Endothelial cell of umbilical vein (primary cell): ENCODE measurements at regions of chr20 and their contacts with region 1.

Region 1: GRCh38 chr20:47620808-47621805 is 119.4 kb downstream of the NCOA3 start:
- DNase-seq: peak; percentile 83
- H3K4me3 ChIP-seq: no peak overlapping the region
- H3K27ac ChIP-seq: no peak overlapping the region
- H3K4me1 ChIP-seq: peaks cover 3% of the 10 kb centered on the region
- H3K27me3 ChIP-seq: no peaks in the 10 kb centered on the region
- CTCF ChIP-seq: peak; percentile 49 to 55
- POLR2A ChIP-seq: no peak

Region 2: GRCh38 chr20:47205577-47206498 is 415.3 kb before region 1 on chr20:
- CTCF ChIA-PET with region 1: interaction called, 41 read pairs
- POLR2A ChIA-PET with region 1: no interaction called
- dilution Hi-C with region 1: no loop called
- intact Hi-C with region 1: no loop called
- DNase-seq: peak; percentile 64
- H3K4me3 ChIP-seq: no peak overlapping the region
- H3K27ac ChIP-seq: no peak overlapping the region
- H3K4me1 ChIP-seq: peaks cover 7% of the 10 kb centered on the region
- H3K27me3 ChIP-seq: no peaks in the 10 kb centered on the region
- CTCF ChIP-seq: peak; percentile 73 to 81
- POLR2A ChIP-seq: no peak

Region 3: GRCh38 chr20:47356526-47357295 is 264.4 kb before region 1 on chr20 and contains the start of gene ZMYND8:
- CTCF ChIA-PET with region 1: interaction called, 10 read pairs
- POLR2A ChIA-PET with region 1: no interaction called
- dilution Hi-C with region 1: no loop called
- intact Hi-C with region 1: no loop called
- DNase-seq: peak; percentile 98
- H3K4me3 ChIP-seq: peak within 1 kb of the TSS; percentile 16 to 82 (median 35)
- H3K27ac ChIP-seq: peak within 1 kb of the TSS; percentile 97
- H3K4me1 ChIP-seq: peaks cover 94% of the 10 kb centered on the region
- H3K27me3 ChIP-seq: no peaks in the 10 kb centered on the region
- CTCF ChIP-seq: no peak
- POLR2A ChIP-seq: peak; percentile 9
- total RNA-seq, gene ZMYND8: 75.2 and 76.3 TPM in 2 replicates

Region 4: GRCh38 chr20:47501483-47502270 is 119.4 kb before region 1 on chr20 and contains the start of gene NCOA3:
- CTCF ChIA-PET with region 1: interaction called, 65 read pairs
- POLR2A ChIA-PET with region 1: interaction called, 4 read pairs
- dilution Hi-C with region 1: no loop called
- intact Hi-C with region 1: loop called (anchors 1 kb)
- DNase-seq: peak; percentile 92
- H3K4me3 ChIP-seq: peak within 1 kb of the TSS; percentile 80 to 94 (median 93)
- H3K27ac ChIP-seq: peak within 1 kb of the TSS; percentile 71
- H3K4me1 ChIP-seq: peaks cover 19% of the 10 kb centered on the region
- H3K27me3 ChIP-seq: no peaks in the 10 kb centered on the region
- CTCF ChIP-seq: peak; percentile 17 to 66
- POLR2A ChIP-seq: peak; percentile 96
- total RNA-seq, gene NCOA3: 26.7 and 35.6 TPM in 2 replicates

Region 5: GRCh38 chr20:47576516-47577033 is 44.5 kb before region 1 on chr20:
- CTCF ChIA-PET with region 1: interaction called, 20 read pairs
- POLR2A ChIA-PET with region 1: no interaction called
- dilution Hi-C with region 1: no loop called
- intact Hi-C with region 1: no loop called
- DNase-seq: peak; percentile 95
- H3K4me3 ChIP-seq: peak overlapping the region in 1 of 3 experiments; percentile 58
- H3K27ac ChIP-seq: peak overlapping the region; percentile 55
- H3K4me1 ChIP-seq: peaks cover 60% of the 10 kb centered on the region
- H3K27me3 ChIP-seq: no peaks in the 10 kb centered on the region
- CTCF ChIP-seq: no peak
- POLR2A ChIP-seq: peak; percentile 80